Sigmoid colon (tissue), 7 donors: ENCODE measurements at regions of chr3 and their contacts with region 1.

Region 1: DNA sequence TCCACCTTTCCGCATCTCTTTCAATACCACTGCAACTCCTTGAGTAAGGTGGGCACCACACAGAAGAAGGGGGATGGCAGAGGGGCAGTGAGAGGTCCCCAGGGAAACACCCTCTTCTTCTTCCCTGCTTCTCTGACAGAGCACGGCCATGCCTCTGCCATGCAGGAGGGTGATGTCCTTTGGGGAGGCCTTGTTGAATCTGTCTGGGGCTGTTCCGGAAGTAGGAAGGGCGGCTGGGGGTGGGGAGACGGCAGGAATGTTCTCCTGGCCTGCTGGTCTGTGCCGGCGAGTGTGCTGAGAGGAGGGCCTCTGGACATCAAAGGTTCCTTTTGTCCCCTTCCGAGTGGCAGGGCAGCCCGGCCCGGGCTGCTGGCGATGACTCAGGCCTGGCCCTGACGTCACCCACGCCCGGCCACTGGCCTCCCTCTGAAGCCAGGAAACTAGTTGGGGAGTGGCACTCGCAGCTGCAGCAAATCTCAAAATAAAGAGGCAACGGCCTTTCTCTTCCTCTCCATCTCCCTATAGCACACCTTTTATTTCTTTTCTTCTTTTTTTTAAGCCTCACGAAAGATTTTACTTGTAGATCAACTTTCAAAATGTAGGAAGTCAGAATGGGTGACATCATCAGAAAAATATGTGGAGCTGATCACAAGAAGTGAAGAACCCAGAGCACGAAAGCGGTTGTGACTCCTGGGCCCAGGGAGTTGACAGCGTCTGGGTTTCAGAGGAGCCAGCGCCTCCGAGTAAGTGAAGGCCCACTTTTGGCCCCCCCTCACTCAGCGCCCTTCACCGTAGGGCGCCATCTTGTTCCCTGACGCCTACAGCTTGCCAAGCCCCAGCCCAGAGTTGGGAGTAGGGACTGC is at the start of gene ZBTB38:
- DNase-seq: peak; percentile 95
- H3K4me3 ChIP-seq: peak within 1 kb of the TSS in 3 of 4 donors; percentile 13 to 24 (median 20)
- H3K27ac ChIP-seq: peak within 1 kb of the TSS; percentile 81 to 95 (median 90)
- H3K4me1 ChIP-seq: peaks cover 0 to 46% (median 46%) of the 10 kb centered on the region in 4 donors
- H3K27me3 ChIP-seq: no peaks in the 10 kb centered on the region
- CTCF ChIP-seq: no peak
- EP300 ChIP-seq: peak in 2 of 4 donors; percentile 60 to 65
- POLR2A ChIP-seq: peak; percentile 41 to 42
- total RNA-seq, gene ZBTB38: 150 to 178 (median 155) TPM

Region 2: DNA sequence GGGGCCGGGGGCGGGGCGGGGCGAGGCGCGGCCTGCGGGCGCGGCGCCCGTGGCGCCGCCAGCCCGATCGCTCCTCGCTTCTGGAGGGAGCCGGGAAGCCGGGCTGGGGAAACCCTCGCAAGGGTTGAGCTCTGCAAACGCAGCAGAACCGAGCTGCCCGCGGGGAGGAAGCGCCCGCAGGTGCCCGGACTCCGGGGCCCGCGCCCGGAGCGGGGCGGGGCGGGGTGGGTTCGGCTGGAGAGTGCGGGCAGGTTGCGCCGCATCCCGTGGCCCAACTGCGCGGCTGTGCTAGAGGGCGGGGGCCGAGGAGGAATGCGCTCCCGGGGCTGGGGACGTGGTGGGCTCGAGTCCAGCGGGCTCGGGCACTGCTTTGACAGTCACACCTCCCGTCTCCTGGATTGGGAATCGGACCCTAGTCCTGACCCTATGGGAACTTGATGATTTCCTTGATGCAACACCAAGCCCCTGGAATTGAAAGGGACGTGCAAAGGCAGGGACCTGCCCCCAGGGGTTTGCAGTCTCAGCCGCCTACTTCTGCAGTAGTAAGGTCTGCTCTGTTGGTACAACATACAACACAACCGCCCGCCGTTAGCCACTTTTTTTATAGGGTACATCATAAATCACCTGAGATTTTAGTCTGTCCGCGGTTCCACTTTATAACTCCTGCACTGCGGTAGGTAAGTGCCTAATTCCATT is 34.3 kb after region 1 on chr3:
- intact Hi-C with region 1: loop called (anchors 2 kb)
- DNase-seq: peak; percentile 89
- H3K4me3 ChIP-seq: peak overlapping the region; percentile 66 to 86 (median 72)
- H3K27ac ChIP-seq: peak overlapping the region; percentile 97 to 98 (median 98)
- H3K4me1 ChIP-seq: peaks cover 0 to 73% (median 68%) of the 10 kb centered on the region in 4 donors
- H3K27me3 ChIP-seq: no peaks in the 10 kb centered on the region
- CTCF ChIP-seq: peak in 1 of 4 experiments; percentile 41
- EP300 ChIP-seq: no peak
- POLR2A ChIP-seq: peak; percentile 41 to 45

Region 3: DNA sequence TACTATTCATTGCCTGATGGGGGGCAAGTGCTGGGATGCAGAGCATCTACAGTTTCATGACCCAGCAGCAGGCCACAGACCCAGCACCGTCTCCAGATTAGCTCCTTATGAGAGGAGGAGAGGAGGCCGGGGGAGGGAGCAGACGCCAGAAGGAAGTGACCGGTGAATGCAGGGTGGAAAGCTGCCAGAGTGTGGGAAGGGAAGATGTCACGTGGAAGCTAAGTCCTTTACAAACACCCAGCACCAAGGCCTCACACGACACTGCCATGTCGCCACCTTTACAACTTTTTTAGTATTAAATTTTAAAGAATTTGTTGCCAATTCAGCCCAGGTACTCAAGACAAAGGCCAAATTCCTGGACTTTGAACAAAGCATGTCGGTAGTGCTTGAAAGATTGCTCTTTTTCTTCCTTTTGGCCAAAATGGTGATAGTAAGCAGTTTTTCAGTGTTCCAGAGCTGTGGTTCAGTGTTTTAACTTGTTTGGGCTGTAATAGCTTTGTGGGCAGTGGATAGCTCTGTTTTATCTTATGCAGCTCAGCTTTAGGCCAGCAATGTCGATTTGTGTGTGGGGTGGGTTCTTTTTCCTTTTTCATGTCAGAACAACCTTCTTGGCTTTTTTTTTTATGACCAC is 58.2 kb after region 1 on chr3:
- intact Hi-C with region 1: no loop called
- DNase-seq: peak; percentile 95
- H3K4me3 ChIP-seq: no peak overlapping the region
- H3K27ac ChIP-seq: peak overlapping the region; percentile 82 to 96 (median 88)
- H3K4me1 ChIP-seq: peaks cover 0 to 100% (median 93%) of the 10 kb centered on the region in 4 donors
- H3K27me3 ChIP-seq: no peaks in the 10 kb centered on the region
- CTCF ChIP-seq: no peak
- EP300 ChIP-seq: no peak
- POLR2A ChIP-seq: no peak

Region 4: GRCh38 chr3:141441381-141442364 is 73.4 kb after region 1 on chr3:
- intact Hi-C with region 1: loop called (anchors 2 kb)
- DNase-seq: no peak
- H3K4me3 ChIP-seq: peak overlapping the region in 2 of 4 donors; percentile 5 to 18
- H3K27ac ChIP-seq: peak overlapping the region; percentile 74 to 96 (median 89)
- H3K4me1 ChIP-seq: peaks cover 0 to 87% (median 75%) of the 10 kb centered on the region in 4 donors
- H3K27me3 ChIP-seq: no peaks in the 10 kb centered on the region
- CTCF ChIP-seq: peak; percentile 29 to 93 (median 86)
- EP300 ChIP-seq: no peak
- POLR2A ChIP-seq: no peak